Lower leg skin (tissue), 4 donors: ENCODE measurements at regions of chr12 and their contacts with region 1.

Region 1: GRCh38 chr12:92199819-92200576 is 54.4 kb upstream of the BTG1 start:
- DNase-seq: no peak
- H3K4me3 ChIP-seq: no peak overlapping the region
- CTCF ChIP-seq: no peak
- POLR2A ChIP-seq: no peak

Region 2: GRCh38 chr12:92151916-92152315 is 48.1 kb before region 1 on chr12:
- intact Hi-C with region 1: loop called (anchors 5 kb)
- DNase-seq: no peak
- H3K4me3 ChIP-seq: no peak overlapping the region
- CTCF ChIP-seq: no peak
- POLR2A ChIP-seq: no peak